Calu3 (cell line): ENCODE measurements at regions of chr18 and their contacts with region 1.

Region 1: GRCh38 chr18:26656944-26657536 is 108.7 kb upstream of the KCTD1 start:
- DNase-seq: peak; percentile 76
- H3K4me3 Mint-ChIP-seq: peak overlapping the region; percentile 86
- H3K27ac Mint-ChIP-seq: peak overlapping the region; percentile 74
- H3K4me1 Mint-ChIP-seq: peaks cover 31% of the 10 kb centered on the region
- H3K27me3 Mint-ChIP-seq: peaks cover 21% of the 10 kb centered on the region
- CTCF ChIP-seq: no peak

Region 2: DNA sequence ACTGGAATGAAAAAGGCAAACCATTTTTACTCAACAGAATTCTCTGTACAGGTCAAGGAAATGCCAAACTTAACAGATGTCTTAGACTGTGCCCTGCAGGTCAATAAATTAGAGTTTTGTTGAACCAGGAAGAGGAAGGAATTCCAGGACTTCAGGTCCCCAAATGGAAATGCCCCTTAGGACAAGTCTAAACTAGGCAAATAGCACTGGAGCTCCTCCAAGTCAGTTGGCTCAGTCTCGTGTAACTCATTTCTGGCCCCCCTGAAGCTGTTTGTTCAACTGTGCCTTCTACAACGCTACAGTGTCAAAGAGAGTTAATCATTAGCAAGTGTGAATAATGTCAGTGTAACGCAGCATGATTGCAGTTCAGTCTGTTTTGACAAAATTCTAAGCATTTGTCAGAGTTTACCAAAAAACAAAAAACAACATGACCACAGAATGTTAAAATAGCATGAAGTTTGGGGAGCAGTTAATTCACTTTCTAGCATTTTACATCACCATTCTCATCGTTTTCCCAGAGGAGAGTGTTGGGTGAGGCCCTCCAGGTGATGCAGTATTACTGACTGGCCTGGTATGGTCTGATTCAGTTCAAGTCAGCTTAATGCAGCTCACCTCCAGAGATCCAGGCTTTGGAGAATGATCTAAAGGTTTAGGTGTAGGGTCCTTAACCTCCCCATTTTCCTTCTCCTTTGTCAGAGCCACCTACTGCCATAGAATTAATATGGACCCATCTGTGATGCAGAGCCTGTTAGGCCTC is 100.4 kb after region 1 on chr18:
- CTCF ChIA-PET with region 1: no interaction called
- intact Hi-C with region 1: loop called (anchors 5 kb)
- DNase-seq: peak; percentile 56
- H3K4me3 Mint-ChIP-seq: peak overlapping the region; percentile 27
- H3K27ac Mint-ChIP-seq: peak overlapping the region; percentile 65
- H3K4me1 Mint-ChIP-seq: peaks cover 52% of the 10 kb centered on the region
- H3K27me3 Mint-ChIP-seq: no peaks in the 10 kb centered on the region
- CTCF ChIP-seq: no peak